Aorta (tissue), 5 donors: ENCODE measurements at regions of chr21 and their contacts with region 1.

Region 1: DNA sequence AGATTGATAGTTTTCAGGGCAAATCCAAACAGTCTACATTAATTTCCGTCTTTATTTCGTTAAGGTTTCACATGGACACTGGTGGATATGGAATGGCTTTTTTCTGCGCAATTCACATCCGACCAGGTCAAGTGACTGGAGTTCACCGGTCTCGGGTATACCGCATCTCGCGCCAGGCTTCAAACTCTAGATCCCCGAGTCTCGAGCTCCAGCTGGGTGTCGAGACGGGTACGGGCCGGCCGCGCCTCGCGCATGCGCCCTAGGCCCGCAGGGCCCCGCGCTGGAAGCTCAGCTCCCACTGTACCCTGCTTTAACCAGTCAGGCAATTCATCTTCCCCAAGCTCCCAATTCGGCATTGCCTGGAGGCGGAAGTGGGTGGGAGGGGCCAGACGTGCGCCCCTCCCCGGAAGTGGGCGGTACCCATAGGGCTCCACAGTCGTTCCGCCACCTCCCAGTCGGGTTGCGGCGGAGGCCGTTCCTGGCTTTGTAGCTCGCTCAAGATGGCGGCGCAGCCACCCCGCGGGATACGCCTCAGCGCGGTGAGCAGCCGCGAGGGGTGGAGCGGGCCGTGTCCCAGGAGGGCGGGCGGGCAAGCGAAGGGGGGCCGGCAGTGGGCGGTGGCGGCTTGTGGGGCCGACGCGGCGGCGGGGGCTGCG is at the start of gene MORC3:
- DNase-seq: peak; percentile 98 to 99
- ATAC-seq: peak; percentile 99
- H3K4me3 ChIP-seq: peak within 1 kb of the TSS; percentile 30 to 58
- H3K27ac ChIP-seq: peak within 1 kb of the TSS; percentile 82 to 87
- H3K4me1 ChIP-seq: no peaks in the 10 kb centered on the region
- H3K27me3 ChIP-seq: no peaks in the 10 kb centered on the region
- total RNA-seq, gene MORC3: 38.7 to 45.2 TPM

Region 2: GRCh38 chr21:36141513-36141925 is 178.4 kb before region 1 on chr21:
- intact Hi-C with region 1: loop called in 1 of 2 experiments (anchors 5 kb)
- DNase-seq: peak; percentile 77 to 84
- ATAC-seq: peak; percentile 70
- H3K4me3 ChIP-seq: no peak overlapping the region
- H3K27ac ChIP-seq: no peak overlapping the region
- H3K4me1 ChIP-seq: no peaks in the 10 kb centered on the region
- H3K27me3 ChIP-seq: no peaks in the 10 kb centered on the region

Region 3: DNA sequence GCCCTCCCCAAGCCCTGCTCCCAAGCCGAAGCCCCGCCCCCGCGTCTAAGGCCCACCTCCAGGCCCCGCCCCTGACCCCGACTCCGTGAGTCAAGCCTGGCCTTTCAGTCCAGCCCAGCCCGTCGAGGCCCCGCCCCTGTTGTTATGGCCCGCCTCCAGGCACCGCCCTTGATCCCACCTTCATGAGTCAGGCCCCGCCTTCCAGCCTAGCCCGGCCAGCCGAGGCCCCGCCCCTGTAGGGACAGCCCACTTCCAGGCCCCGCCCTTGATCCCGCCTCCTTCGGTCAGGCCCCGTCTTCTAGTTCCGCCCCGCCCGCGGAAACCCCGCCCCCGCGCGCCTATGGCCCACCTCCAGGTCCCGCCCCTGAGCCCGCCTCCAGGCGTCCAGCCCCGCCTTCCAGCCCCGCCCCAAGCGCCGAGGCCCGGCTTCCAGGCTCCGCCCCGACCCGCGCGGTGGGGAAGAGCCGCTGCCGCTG is 163.5 kb before region 1 on chr21:
- intact Hi-C with region 1: loop called in 1 of 2 experiments (anchors 5 kb)
- DNase-seq: peak; percentile 100
- ATAC-seq: peak; percentile 98
- H3K4me3 ChIP-seq: peak overlapping the region; percentile 75 to 95
- H3K27ac ChIP-seq: no peak overlapping the region
- H3K4me1 ChIP-seq: no peaks in the 10 kb centered on the region
- H3K27me3 ChIP-seq: no peaks in the 10 kb centered on the region

Region 4: DNA sequence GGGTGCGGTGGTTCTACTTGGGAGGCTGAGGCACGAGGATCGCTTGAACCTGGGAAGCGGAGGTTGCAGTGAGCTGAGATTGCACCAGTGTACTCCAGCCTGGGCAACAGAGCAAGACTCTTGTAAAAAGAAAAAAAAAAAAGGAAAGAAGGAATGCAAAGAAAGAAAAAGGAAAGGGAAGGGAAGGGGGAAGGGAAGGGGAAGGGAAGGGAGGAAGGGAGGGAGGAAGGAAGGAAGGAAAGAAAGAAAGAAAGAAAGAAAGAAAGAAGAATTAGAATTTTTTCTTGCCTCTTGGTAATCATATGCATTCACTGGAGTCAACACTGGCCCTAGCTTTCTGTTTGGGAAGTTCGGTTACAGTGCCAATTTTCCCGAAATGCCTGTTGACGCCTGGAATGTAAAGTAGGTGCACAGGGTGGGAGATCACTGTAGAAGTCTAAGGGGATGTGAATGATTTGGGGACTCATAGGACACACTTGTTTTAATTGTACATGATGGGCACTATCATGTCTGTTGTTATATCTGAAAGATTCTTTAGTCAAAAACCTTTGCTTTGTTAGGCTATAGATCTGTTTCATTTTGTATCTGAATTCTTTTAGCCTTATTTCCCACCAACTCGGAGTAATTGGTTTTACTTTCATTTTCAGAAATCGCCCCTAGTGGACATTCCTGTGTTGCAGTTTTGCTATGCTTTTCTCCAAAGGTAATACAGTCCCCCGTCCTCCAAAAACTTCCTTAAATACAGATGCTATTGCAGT is 59.7 kb before region 1 on chr21:
- intact Hi-C with region 1: loop called in 1 of 2 experiments (anchors 5 kb)
- DNase-seq: no peak
- ATAC-seq: peak; percentile 85
- H3K4me3 ChIP-seq: peak overlapping the region; percentile 70 to 91
- H3K27ac ChIP-seq: peak overlapping the region in 1 of 2 donors; percentile 45
- H3K4me1 ChIP-seq: no peaks in the 10 kb centered on the region
- H3K27me3 ChIP-seq: no peaks in the 10 kb centered on the region